ENCODE measurements at regions of chr5 and their contacts with region 1.

Region 1: GRCh38 chr5:68287976-68288706 is 72.6 kb downstream of the PIK3R1 start:
- DNase-seq: peak; percentile 86
- H3K4me3 Mint-ChIP-seq: peak overlapping the region; percentile 87
- H3K27ac Mint-ChIP-seq: peak overlapping the region; percentile 88
- H3K4me1 Mint-ChIP-seq: peaks cover 61% of the 10 kb centered on the region
- H3K27me3 Mint-ChIP-seq: no peaks in the 10 kb centered on the region

Region 2: GRCh38 chr5:68252673-68253623 is 35.2 kb before region 1 on chr5:
- intact Hi-C with region 1: no loop called
- DNase-seq: peak; percentile 81
- H3K4me3 Mint-ChIP-seq: no peak overlapping the region
- H3K27ac Mint-ChIP-seq: no peak overlapping the region
- H3K4me1 Mint-ChIP-seq: peaks cover 61% of the 10 kb centered on the region
- H3K27me3 Mint-ChIP-seq: no peaks in the 10 kb centered on the region

Region 3: GRCh38 chr5:68303038-68303738 is 15.0 kb after region 1 on chr5:
- intact Hi-C with region 1: loop called (anchors 2 kb)
- DNase-seq: no peak
- H3K4me3 Mint-ChIP-seq: peak overlapping the region; percentile 9
- H3K27ac Mint-ChIP-seq: peak overlapping the region; percentile 71
- H3K4me1 Mint-ChIP-seq: peaks cover 32% of the 10 kb centered on the region
- H3K27me3 Mint-ChIP-seq: peaks cover 8% of the 10 kb centered on the region

Region 4: DNA sequence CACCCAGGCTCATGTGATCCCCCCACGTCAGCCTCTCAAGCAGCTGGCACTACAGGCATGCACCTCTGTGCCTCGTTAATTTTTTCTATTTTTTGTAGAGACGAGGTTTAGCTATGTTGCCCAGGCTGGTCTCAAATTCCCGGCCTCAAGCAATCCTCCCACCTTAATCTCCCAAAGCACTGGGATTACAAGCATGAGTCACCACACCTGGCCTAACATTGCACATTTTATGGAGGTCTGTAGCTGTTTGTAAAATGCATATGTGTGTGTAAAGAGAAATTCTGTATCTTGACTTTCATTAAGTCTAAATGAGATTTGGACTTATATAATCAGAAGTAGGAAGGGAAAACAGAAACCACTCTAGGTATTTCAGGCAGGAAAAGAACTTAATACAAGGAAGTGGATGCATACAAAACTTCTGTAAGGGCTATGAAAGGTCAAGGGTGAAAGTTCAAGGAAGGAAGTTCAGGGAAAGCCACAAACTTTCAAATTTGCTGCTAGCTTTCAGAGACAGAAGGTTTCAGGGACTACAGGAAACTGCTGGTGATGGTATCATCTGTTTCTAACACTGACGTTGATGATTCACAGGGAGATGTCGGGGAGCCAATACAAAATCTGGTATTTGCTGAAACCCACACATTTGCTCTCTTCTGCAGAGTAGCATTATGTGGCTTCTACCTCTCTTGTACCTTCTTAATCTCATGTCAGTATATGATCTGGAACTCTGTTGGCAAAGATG is 136.8 kb after region 1 on chr5:
- intact Hi-C with region 1: loop called (anchors 1 kb)
- DNase-seq: peak; percentile 82
- H3K4me3 Mint-ChIP-seq: peak overlapping the region; percentile 27
- H3K27ac Mint-ChIP-seq: peak overlapping the region; percentile 73
- H3K4me1 Mint-ChIP-seq: peaks cover 46% of the 10 kb centered on the region
- H3K27me3 Mint-ChIP-seq: peaks cover 15% of the 10 kb centered on the region

Region 5: DNA sequence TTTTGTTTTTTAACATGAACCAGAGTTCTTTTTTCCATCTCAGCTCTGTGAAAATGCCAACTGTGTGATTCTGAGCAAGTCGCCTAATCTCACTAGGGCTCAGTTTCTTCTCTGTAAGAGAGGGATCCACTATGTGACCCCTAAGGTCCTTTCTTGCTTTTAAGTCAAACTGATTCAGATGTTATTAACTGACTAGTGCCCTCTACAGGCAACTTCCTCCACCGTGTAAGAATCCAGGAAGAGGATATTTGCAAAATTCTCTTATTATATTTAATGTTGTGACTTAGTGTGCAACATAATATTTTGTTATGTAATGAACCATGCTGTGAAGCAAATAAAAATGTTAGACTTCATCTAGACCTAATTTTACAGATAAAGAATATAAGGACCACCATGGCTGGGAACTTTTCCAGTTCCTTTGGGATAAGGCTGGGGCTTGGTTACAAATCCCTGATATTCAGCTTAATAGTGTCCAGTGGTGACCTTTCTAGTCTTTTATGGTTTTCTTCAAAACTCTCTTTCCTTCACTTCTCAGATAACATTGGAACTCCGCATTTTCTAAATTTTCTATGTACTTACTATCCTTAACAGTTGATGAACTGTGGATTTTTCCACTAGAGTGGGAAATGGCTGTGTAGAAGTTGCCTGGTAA is 172.1 kb after region 1 on chr5:
- intact Hi-C with region 1: loop called (anchors 1 kb)
- DNase-seq: peak; percentile 83
- H3K4me3 Mint-ChIP-seq: no peak overlapping the region
- H3K27ac Mint-ChIP-seq: no peak overlapping the region
- H3K4me1 Mint-ChIP-seq: peaks cover 17% of the 10 kb centered on the region
- H3K27me3 Mint-ChIP-seq: peaks cover under 1% of the 10 kb centered on the region

Region 6: DNA sequence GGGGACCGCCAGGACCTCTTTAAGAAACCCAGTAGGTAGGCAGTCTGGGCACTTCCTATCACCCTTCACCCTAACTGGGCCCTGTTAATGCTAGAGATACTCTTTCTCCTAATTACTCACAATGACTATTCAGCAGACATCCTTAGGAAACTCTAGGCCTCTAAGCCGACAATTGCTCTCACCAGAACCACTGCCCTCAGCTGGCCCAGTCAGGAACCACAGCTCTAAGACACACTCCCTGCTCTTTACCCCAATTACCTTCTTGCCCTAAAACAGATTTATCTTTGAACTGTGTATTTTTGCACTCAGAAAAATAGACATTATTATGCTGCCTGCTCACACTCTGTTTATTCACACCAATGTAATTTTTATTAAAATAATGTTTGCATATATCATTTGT is 373.1 kb after region 1 on chr5:
- intact Hi-C with region 1: loop called (anchors 10 kb)
- DNase-seq: peak; percentile 60
- H3K4me3 Mint-ChIP-seq: no peak overlapping the region
- H3K27ac Mint-ChIP-seq: no peak overlapping the region
- H3K4me1 Mint-ChIP-seq: no peaks in the 10 kb centered on the region
- H3K27me3 Mint-ChIP-seq: no peaks in the 10 kb centered on the region

Region 7: DNA sequence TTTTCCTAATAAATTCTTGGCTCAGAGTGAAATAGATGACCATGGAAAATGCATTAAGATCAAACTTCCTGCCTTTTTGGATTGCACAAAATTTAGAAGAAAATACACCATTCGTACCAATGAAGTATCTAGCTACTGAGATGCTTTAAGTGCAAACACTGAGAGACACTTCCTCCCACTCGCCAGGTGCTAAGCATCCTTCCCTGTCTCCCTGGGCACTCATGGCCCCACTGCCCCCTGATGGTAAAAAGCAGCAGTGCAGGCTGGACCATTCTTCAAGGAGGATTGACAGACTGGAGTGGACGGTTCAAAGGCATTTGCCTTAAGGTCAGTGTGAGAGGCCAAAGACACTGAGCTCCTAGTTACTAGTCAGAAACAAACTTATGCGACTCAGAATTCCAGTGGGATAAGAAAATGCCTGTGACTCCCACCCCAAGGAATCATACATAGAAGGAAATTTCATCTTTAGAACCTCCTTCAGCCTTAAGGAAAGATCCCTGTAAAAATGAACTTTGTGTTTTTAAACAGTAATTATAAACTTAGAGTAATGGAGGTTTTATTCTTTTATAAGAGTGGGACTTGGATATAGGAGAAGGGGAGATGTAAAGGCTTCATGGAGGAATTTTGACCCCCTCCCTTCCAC is 719.7 kb after region 1 on chr5:
- intact Hi-C with region 1: loop called (anchors 2 kb)
- DNase-seq: peak; percentile 92
- H3K4me3 Mint-ChIP-seq: no peak overlapping the region
- H3K27ac Mint-ChIP-seq: no peak overlapping the region
- H3K4me1 Mint-ChIP-seq: no peaks in the 10 kb centered on the region
- H3K27me3 Mint-ChIP-seq: peaks cover 32% of the 10 kb centered on the region

Measured in activated CD4-positive, alpha-beta T cell treated with anti-CD3 and anti-CD28 coated beads, Interleukin-2, amount 10 ng/mL, durations not matched to agents 24 days and 14 days (primary cell).